Activated CD4-positive, alpha-beta memory T cell treated with anti-CD3 and anti-CD28 coated beads for 36 hours (primary cell): ENCODE measurements at regions of chr17 and their contacts with region 1.

Region 1: DNA sequence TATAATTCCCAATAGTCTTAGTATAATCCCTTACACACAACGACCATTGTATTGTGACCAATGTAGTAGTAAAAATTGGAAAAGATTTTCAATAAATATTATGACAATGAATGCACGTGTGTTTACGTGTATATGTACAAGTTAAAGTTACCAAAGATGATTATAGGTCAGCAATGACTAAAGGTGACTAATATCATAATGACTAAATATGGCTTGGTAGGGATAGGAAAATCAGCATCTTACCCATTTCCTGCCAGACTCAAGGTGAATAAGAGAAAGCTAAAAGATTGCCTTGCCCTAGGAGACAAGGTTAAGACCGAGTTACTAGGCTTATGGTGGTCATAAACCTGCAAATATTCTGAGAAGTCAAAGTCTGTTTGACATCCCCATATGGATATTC is 34.4 kb downstream of the CPD start:
- DNase-seq: no peak
- H3K4me3 Mint-ChIP-seq: no peak overlapping the region
- H3K27ac Mint-ChIP-seq: peak overlapping the region; percentile 58
- H3K4me1 Mint-ChIP-seq: peaks cover 30% of the 10 kb centered on the region
- H3K27me3 Mint-ChIP-seq: no peaks in the 10 kb centered on the region

Region 2: DNA sequence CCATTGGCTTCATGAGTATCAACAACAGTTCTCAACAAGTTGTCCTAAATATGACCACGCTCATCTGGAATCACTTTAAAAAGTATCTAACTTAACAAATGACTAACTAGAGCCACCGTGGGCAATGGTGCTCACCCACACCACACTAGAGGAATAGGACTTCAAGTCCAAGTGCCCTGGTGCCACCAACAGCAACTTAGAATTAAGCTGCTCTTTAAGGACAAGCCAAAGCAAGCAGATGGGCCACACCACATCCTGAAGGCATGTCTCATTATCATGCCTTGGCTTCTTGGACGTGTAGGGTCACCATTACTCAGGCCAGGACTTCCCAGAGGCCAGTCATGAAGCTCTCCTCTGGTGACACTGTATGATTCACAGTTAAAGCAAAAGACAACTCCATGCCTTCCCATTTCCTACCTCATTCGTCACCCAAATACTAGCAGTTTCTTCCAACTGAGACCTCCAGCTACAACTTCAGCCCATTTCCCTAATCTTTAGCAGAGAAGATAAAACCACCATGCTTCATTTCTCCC is 168.2 kb before region 1 on chr17:
- CTCF ChIA-PET with region 1: no interaction called
- POLR2A ChIA-PET with region 1: no interaction called
- intact Hi-C with region 1: no loop called
- DNase-seq: no peak
- H3K4me3 Mint-ChIP-seq: no peak overlapping the region
- H3K27ac Mint-ChIP-seq: no peak overlapping the region
- H3K4me1 Mint-ChIP-seq: no peaks in the 10 kb centered on the region
- H3K27me3 Mint-ChIP-seq: no peaks in the 10 kb centered on the region

Region 3: DNA sequence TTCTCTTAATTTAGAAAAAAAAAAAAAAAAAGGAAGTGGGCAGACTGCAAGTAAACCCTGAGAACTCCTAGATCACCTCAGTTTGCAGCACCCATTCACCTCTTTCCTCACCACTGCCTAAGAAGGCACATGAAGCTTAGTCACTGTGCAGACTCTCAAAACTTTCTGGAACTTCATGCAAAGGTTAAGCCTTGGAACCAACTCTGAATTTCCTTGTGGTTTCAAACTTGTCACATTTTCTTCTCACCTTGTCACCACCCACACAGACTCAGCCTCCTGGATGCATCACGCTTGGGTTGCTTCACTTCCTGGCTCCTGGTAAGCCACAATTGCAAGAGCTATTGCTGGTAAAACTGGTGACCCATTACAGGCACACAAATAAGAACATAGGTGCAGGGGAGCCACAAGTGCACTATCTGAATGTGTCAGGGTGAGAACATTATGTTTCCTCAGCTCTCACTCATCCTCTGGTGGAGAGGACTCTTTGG is 49.4 kb before region 1 on chr17:
- CTCF ChIA-PET with region 1: no interaction called
- POLR2A ChIA-PET with region 1: no interaction called
- intact Hi-C with region 1: loop called (anchors 1 kb)
- DNase-seq: peak; percentile 94
- H3K4me3 Mint-ChIP-seq: peak overlapping the region; percentile 13
- H3K27ac Mint-ChIP-seq: peak overlapping the region; percentile 78
- H3K4me1 Mint-ChIP-seq: peaks cover 28% of the 10 kb centered on the region
- H3K27me3 Mint-ChIP-seq: no peaks in the 10 kb centered on the region

Region 4: GRCh38 chr17:30401097-30401496 is 12.0 kb before region 1 on chr17:
- CTCF ChIA-PET with region 1: no interaction called
- POLR2A ChIA-PET with region 1: no interaction called
- intact Hi-C with region 1: no loop called
- DNase-seq: no peak
- H3K4me3 Mint-ChIP-seq: no peak overlapping the region
- H3K27ac Mint-ChIP-seq: no peak overlapping the region
- H3K4me1 Mint-ChIP-seq: peaks cover 17% of the 10 kb centered on the region
- H3K27me3 Mint-ChIP-seq: no peaks in the 10 kb centered on the region

Region 5: DNA sequence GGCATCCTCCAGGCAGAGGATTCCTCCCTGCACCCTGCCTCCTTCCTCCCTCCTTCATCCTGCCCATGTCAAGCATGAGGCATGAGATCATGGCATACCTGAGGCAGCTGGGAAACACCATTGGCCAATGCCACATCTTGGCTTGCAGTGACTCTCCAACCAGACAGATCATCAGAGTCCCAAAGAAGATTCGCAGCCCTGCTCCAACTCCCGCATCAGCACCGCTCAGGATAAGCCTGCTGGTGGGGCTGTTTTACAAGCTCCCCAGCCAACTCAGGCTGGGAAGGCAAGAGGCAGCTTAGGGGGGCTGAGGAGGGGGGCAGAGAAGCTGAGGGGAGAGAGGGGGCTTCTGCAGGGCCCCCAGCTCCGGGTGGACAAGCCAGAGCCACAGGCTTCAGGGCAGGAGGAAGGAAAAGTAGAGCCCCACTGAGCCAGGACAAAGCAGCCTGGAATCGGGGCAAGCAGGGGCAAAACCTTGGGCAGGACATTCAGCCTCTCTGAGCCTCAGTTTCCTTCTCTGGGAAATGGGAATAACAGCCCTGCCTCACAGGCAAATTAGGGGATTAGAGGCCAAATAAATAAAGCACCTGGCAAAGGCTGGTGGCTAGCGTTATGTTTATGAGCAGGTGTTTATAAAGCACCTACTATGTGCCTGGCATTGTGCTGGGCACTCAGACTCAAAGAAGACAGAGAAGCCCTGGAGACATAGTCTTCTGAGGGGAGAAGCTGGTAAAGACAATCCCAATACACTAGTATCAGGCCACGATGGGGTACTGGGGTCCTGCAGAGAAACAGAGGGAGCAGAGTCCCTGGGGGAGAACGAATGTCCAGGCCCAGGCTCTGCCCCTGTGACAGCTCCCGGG is 152.2 kb after region 1 on chr17:
- CTCF ChIA-PET with region 1: no interaction called
- POLR2A ChIA-PET with region 1: no interaction called
- intact Hi-C with region 1: no loop called
- DNase-seq: no peak
- H3K4me3 Mint-ChIP-seq: no peak overlapping the region
- H3K27ac Mint-ChIP-seq: no peak overlapping the region
- H3K4me1 Mint-ChIP-seq: no peaks in the 10 kb centered on the region
- H3K27me3 Mint-ChIP-seq: no peaks in the 10 kb centered on the region